GM13976 (cell line): ENCODE measurements at regions of chr17 and their contacts with region 1.

Region 1: DNA sequence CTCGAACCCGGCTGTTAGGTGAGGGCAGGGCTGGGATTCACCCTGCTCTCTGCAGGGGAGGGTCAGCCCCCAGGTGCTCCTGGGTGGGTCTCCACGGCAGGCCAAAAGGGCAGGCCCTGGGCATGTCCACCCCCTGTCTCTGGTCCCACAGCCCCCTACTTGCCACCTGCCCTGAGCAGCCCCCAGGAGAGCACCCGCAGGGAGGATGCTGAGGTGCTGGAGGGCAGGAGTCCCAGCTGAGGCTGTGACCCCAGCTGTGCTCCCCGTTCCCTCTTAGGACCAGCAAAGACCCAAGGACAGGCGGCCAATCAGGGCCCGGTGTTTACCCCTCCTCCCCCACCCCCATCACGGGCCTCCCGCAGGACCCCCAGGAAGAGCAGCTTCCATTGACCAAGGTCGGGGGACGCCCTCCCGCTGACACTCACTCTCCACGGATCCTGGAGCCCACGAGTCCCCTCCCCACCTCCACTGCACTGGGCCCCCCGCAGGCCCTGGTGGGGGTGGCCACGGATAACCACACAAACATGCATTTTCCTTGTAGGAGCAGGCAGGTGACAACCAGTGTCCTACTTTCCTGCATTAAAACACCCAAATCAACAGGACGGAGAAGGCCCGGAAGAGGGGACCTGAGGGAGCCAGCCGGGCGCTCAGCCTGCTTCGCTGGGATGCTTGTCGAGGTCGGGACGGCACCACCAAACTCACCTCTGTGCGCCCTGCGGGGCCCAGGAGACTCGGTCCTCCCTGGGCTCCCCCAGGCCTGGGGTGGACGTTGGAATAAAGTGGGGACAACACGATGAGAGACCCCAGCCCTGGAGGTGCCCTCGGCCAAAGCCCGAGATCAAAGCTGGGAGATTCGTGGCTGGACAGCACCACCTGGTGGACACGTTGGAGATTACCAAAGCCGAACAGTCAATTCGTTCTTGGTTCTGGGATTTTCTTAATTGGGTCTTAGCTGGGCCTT is 22.5 kb upstream of the ENPP7 start:
- DNase-seq: peak; percentile 84
- CTCF ChIP-seq: peak; percentile 74

Region 2: GRCh38 chr17:79400989-79401703 is 307.1 kb before region 1 on chr17:
- in situ Hi-C with region 1: loop called (anchors 10 kb)
- DNase-seq: peak; percentile 91
- CTCF ChIP-seq: peak; percentile 88